WTC11 (cell line): ENCODE measurements at regions of chr3 and their contacts with region 1.

Region 1: GRCh38 chr3:52001443-52001974 is 5.8 kb upstream of the RPL29 start:
- DNase-seq: peak; percentile 97
- ATAC-seq: peak; percentile 76
- H3K4me3 Mint-ChIP-seq: no peak overlapping the region
- H3K27ac Mint-ChIP-seq: peak overlapping the region; percentile 86
- H3K4me1 Mint-ChIP-seq: peaks cover 42% of the 10 kb centered on the region
- H3K27me3 Mint-ChIP-seq: no peaks in the 10 kb centered on the region
- CTCF ChIP-seq: peak; percentile 90

Region 2: DNA sequence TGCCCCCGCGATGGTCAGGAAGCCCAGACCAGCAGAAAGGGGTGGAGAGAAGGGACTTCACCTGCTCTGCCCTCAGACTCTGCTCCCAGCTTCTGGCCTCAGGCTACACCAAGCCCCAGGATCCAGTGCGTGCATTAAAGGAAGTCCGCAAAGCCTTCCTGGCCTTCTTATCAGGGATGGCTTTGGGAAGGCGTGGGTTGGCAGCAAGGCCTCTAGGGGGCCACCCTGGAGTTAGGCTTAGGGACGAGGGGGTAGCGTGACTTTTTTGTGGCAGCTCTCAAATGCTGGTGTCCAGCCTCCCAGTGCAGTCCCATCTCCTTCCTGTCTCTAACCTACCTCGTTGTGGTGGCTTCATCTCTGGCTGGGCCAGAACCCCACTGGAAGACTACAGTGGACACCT is 13.1 kb after region 1 on chr3:
- CTCF ChIA-PET with region 1: interaction called, 124 read pairs
- POLR2A ChIA-PET with region 1: no interaction called
- DNase-seq: peak; percentile 66
- ATAC-seq: peak; percentile 92
- H3K4me3 Mint-ChIP-seq: no peak overlapping the region
- H3K27ac Mint-ChIP-seq: 0 out of 2 replicates have a peak overlapping the region, but pooled peaks have one; percentile 15
- H3K4me1 Mint-ChIP-seq: peaks cover 5% of the 10 kb centered on the region; the same call in 1 of the 2 replicates
- H3K27me3 Mint-ChIP-seq: no peaks in the 10 kb centered on the region; the same call in 1 of the 2 replicates
- CTCF ChIP-seq: no peak

Region 3: DNA sequence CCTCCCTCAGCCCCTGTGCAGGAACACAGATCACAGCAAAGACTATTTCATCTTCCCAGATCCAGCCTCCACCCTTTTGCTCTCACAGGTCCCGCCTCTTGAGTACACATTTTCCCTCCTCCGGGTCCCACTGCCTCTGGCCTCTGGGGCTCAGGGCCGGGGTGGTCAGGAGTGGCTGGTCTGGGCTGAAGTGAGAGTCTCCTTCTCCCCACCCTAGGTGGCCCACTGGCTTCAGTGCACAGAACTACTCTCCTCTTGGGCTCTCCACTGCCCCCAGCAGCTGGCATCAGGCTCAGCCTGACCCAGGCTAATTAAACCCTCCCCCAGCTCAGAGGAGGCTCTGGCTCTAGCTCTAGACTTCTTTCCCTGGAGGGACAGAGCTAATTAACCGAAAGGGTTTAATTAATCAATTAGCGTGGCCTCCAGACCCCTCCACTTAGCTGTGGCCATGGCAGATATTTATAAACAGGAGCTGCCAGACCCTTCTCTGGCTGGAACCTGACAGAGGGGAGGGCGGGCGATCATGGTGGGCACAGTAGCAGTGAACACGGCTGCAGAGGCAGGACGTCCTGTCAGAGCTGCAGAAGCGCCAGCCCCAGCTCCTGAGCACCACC is 39.7 kb after region 1 on chr3:
- CTCF ChIA-PET with region 1: interaction called, 115 read pairs
- POLR2A ChIA-PET with region 1: no interaction called
- DNase-seq: peak; percentile 41
- ATAC-seq: peak; percentile 46
- H3K4me3 Mint-ChIP-seq: no peak overlapping the region
- H3K27ac Mint-ChIP-seq: no peak overlapping the region
- H3K4me1 Mint-ChIP-seq: peaks cover 9% of the 10 kb centered on the region
- H3K27me3 Mint-ChIP-seq: no peaks in the 10 kb centered on the region
- CTCF ChIP-seq: no peak

Region 4: GRCh38 chr3:52068055-52068571 is 66.6 kb after region 1 on chr3:
- CTCF ChIA-PET with region 1: interaction called, 23 read pairs
- POLR2A ChIA-PET with region 1: no interaction called
- DNase-seq: no peak
- ATAC-seq: no peak
- H3K4me3 Mint-ChIP-seq: no peak overlapping the region
- H3K27ac Mint-ChIP-seq: no peak overlapping the region
- H3K4me1 Mint-ChIP-seq: no peaks in the 10 kb centered on the region
- H3K27me3 Mint-ChIP-seq: no peaks in the 10 kb centered on the region
- CTCF ChIP-seq: no peak

Region 5: DNA sequence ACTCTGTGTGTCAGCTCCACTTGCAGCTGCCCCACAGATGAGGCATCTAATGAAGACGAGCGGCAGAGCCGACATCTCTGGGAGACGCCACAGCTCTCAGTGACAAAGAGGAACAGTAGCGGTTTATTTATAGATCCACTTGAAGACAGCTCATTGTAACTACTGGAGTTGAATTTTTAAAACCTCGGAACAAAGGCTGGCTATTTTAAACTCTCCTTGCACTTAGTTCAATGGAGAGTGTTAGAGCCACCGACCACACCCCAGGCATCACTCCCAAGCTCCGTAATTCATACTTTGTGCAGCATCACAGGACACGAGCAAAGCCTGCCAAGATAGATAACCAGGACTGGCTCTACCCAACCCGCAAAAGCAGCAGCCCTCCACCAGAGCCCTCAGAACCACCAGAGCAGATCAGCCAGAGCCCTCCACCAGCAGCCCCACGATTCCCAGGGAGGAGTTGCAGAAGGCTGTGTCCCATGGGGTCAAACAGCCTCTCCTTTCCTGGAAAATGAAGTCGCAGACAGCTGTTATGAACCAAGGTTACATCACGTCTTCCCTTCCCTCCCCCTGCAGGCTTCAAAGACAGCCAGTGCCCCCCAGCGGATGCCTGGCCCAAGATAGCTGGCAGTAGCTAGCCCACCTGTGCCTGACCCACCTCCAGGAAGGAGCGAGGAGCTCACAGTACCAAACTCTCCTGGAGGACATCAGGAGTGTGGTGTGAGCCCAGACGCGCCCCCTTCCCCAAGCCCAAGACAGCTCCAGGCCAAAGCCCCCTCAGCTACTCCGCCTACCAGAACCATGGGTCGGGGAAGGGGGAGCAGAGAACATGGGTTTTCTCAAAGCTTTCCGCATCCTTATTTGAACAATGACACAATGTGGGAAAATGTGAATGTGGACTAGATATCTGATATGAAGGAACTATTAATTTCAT is 107.1 kb after region 1 on chr3:
- CTCF ChIA-PET with region 1: interaction called, 21 read pairs
- POLR2A ChIA-PET with region 1: no interaction called
- DNase-seq: peak; percentile 30
- ATAC-seq: peak; percentile 80
- H3K4me3 Mint-ChIP-seq: no peak overlapping the region
- H3K27ac Mint-ChIP-seq: peak overlapping the region; percentile 30; the same call in 1 of the 2 replicates
- H3K4me1 Mint-ChIP-seq: peaks cover 3% of the 10 kb centered on the region; the same call in 1 of the 2 replicates
- H3K27me3 Mint-ChIP-seq: no peaks in the 10 kb centered on the region
- CTCF ChIP-seq: no peak

Region 6: GRCh38 chr3:52154117-52155094 is 152.9 kb after region 1 on chr3 and contains the start of gene POC1A:
- CTCF ChIA-PET with region 1: interaction called, 12 read pairs
- POLR2A ChIA-PET with region 1: interaction called, 6 read pairs
- DNase-seq: peak; percentile 92
- ATAC-seq: peak; percentile 92
- H3K4me3 Mint-ChIP-seq: peak within 1 kb of the TSS; percentile 91
- H3K27ac Mint-ChIP-seq: peak within 1 kb of the TSS; percentile 96
- H3K4me1 Mint-ChIP-seq: peaks cover 33% of the 10 kb centered on the region
- H3K27me3 Mint-ChIP-seq: no peaks in the 10 kb centered on the region
- CTCF ChIP-seq: no peak; the same call in 1 of the 2 replicates
- total RNA-seq, gene POC1A: 31.3 to 36.2 TPM (median 34.9 TPM) in 3 replicates

Region 7: GRCh38 chr3:52339612-52340011 is 338.1 kb after region 1 on chr3:
- CTCF ChIA-PET with region 1: interaction called, 10 read pairs
- POLR2A ChIA-PET with region 1: no interaction called
- DNase-seq: peak; percentile 35
- ATAC-seq: peak; percentile 58
- H3K4me3 Mint-ChIP-seq: no peak overlapping the region
- H3K27ac Mint-ChIP-seq: no peak overlapping the region
- H3K4me1 Mint-ChIP-seq: no peaks in the 10 kb centered on the region
- H3K27me3 Mint-ChIP-seq: no peaks in the 10 kb centered on the region; the same call in 1 of the 2 replicates
- CTCF ChIP-seq: peak; percentile 67